Heart right ventricle (tissue), 16 donors: ENCODE measurements at regions of chrX and their contacts with region 1.

Region 1: DNA sequence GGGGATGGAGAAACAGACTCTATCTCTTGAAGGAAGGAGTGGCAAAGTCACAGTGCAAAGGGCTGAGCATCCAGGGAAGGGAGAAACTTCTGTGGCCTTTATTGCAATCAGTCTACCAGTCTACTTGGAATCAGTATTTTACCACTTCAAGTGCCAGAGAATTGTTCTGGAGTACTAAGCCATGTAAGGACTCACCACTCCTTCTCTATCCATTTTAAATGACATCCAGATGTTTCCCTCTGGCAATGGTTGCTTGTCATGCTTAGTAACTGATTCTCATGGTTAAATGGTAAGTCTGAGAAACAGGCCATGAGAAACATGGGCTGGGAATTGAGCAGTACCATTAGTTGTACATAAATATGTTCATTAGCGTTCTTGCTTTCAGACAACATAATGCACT is 21.1 kb upstream of the SMIM10 start:
- DNase-seq: no peak
- ATAC-seq: no peak
- H3K4me3 ChIP-seq: no peak overlapping the region
- H3K27ac ChIP-seq: no peak overlapping the region
- H3K4me1 ChIP-seq: no peaks in the 10 kb centered on the region
- H3K27me3 ChIP-seq: peaks cover 0 to 25% (median 0%) of the 10 kb centered on the region in 7 donors
- CTCF ChIP-seq: no peak

Region 2: DNA sequence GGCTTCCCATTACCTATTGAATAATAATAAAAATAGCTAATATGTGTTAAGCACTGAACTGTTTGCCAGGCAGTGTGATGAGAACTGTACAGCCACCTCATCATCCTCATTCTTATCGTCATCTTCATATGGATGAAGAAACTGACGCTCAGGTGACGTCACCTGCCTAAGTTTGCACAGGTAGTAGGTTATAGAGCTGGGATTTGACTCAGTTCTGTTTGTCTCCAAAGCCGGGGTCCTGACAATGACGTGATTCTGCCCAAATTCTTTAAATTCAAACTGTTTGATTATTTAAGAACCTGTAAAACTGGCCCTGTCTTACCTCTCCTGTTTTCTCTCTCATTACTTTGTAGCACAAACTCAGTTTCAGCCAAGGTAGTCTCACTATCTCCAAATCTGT is 129.3 kb before region 1 on chrX:
- intact Hi-C with region 1: no loop called
- DNase-seq: no peak
- ATAC-seq: no peak
- H3K4me3 ChIP-seq: no peak overlapping the region
- H3K27ac ChIP-seq: no peak overlapping the region
- H3K4me1 ChIP-seq: no peaks in the 10 kb centered on the region
- H3K27me3 ChIP-seq: no peaks in the 10 kb centered on the region
- CTCF ChIP-seq: no peak

Region 3: GRCh38 chrX:135003876-135004623 is 34.3 kb after region 1 on chrX:
- intact Hi-C with region 1: loop called in 5 of 10 experiments (anchors 2 to 5 kb)
- DNase-seq: peak; percentile 88 to 89
- ATAC-seq: peak; percentile 98 to 100 (median 99)
- H3K4me3 ChIP-seq: peak overlapping the region; percentile 28 to 56 (median 50)
- H3K27ac ChIP-seq: peak overlapping the region in 4 of 10 donors; percentile 29 to 50 (median 44)
- H3K4me1 ChIP-seq: peaks cover 0 to 11% (median 0%) of the 10 kb centered on the region in 9 donors
- H3K27me3 ChIP-seq: peaks cover 0 to 22% (median 0%) of the 10 kb centered on the region in 7 donors
- CTCF ChIP-seq: no peak

Region 4: DNA sequence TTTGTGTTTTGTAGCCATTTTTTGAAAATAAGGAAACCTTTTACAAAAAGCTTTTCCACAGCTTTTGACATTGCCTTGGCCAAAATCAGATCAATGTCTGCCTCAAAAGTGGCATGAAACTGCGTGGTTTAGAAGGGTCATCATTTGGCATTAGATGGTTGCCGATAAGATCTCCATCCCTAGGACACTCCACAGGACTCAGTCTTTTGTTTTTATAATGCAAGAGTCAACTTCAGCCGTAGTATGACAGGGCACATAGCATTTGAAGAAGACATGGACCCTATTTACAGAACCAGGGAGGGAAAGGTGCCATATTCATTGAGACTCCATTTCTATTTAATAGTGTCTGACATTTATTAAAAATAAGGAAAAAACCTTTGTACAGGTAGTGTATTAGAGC is 80.9 kb after region 1 on chrX:
- intact Hi-C with region 1: loop called in 1 of 10 experiments (anchors 10 kb)
- DNase-seq: no peak
- ATAC-seq: no peak
- H3K4me3 ChIP-seq: peak overlapping the region in 9 of 10 donors; percentile 40 to 69 (median 60)
- H3K27ac ChIP-seq: peak overlapping the region in 3 of 10 donors; percentile 86 to 89 (median 88)
- H3K4me1 ChIP-seq: peaks cover 0 to 16% (median 9%) of the 10 kb centered on the region in 9 donors
- H3K27me3 ChIP-seq: no peaks in the 10 kb centered on the region
- CTCF ChIP-seq: no peak

Region 5: DNA sequence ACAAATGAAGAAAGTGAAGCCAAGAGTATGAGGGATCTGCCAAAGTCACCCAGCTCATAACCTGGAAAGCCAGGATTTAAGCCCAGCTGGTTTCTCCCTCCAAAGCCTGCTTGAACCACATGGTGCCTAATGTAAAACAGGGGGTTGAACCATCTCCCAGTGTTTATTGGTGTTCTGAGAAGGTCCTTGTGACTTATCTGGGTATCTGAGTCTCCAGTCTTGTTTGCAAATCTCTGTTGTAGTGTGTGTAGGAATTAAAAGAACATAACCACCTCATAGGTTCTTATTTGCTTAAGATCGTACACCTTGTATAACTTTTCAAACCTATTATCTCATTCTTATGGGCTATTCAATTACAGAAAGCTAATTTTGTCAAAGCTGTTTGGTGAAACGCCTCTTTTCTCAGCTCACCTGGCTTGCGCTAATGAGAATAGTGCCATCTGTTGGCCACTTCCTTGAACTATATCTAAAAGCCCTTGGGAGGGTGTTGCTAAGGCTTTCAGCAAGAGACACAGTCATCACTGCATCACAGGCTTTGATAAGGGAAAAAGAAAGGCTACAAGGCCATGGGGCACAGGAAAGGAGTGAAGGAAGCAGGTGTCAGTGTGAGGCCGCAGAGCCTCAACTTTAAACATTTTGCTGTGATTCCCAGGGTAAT is 116.6 kb after region 1 on chrX:
- intact Hi-C with region 1: loop called in 6 of 10 experiments (anchors 5 to 10 kb)
- DNase-seq: peak in 1 of 2 donors; percentile 16
- ATAC-seq: peak in 5 of 8 donors; percentile 46 to 70 (median 54)
- H3K4me3 ChIP-seq: no peak overlapping the region
- H3K27ac ChIP-seq: no peak overlapping the region
- H3K4me1 ChIP-seq: no peaks in the 10 kb centered on the region
- H3K27me3 ChIP-seq: peaks cover 0 to 44% (median 0%) of the 10 kb centered on the region in 7 donors
- CTCF ChIP-seq: peak; percentile 25 to 70 (median 60)

Region 6: GRCh38 chrX:135094726-135095125 is 125.0 kb after region 1 on chrX:
- intact Hi-C with region 1: loop called in 6 of 10 experiments (anchors 5 to 10 kb)
- DNase-seq: no peak
- ATAC-seq: no peak
- H3K4me3 ChIP-seq: no peak overlapping the region
- H3K27ac ChIP-seq: no peak overlapping the region
- H3K4me1 ChIP-seq: peaks cover 0 to 5% (median 0%) of the 10 kb centered on the region in 9 donors
- H3K27me3 ChIP-seq: peaks cover 0 to 51% (median 0%) of the 10 kb centered on the region in 7 donors
- CTCF ChIP-seq: no peak